Prostate gland (tissue), 2 donors: ENCODE measurements at regions of chr19 and their contacts with region 1.

Region 1: GRCh38 chr19:52637718-52638585 is at the start of gene ZNF83:
- DNase-seq: peak; percentile 98
- H3K4me3 ChIP-seq: peak within 1 kb of the TSS; percentile 47 to 71
- H3K27ac ChIP-seq: peak within 1 kb of the TSS; percentile 78 to 86
- H3K4me1 ChIP-seq: no peaks in the 10 kb centered on the region
- H3K27me3 ChIP-seq: no peaks in the 10 kb centered on the region
- CTCF ChIP-seq: no peak
- POLR2A ChIP-seq: peak; percentile 60
- total RNA-seq, gene ZNF83: 36.3 to 62.1 TPM

Region 2: DNA sequence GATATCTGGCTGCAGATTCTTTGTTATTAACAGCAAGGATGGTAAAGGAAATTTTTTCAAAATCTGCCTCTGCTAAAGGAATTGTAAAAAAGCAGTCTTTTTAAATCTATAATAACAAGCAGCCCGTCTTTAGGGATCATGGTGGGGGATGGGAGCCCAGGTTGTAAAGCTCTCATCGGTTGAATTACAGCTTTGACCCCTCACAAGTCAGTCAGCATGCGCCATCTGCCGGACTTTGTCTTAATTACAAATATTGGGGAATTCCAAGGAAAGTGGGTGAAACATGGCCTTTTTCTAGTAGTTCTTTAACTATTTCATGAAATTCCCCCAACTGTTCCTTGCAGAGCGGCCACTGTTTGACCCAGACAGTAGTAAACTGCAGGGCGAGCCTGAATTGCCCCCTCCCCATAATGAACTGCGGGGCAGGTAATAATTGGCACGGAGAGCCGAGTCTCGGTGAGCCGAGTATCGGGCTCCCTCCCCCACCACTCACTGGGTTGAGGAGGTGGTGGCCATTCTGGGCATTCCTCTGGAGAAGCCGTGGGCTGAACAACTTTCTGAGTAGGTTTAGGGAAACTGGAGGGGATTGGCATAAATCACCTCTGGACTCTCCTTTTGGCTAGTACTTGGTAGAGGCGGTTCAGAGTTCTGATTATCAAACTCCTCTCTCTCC is 173.0 kb before region 1 on chr19:
- intact Hi-C with region 1: no loop called
- DNase-seq: no peak
- H3K4me3 ChIP-seq: no peak overlapping the region
- H3K27ac ChIP-seq: no peak overlapping the region
- H3K4me1 ChIP-seq: no peaks in the 10 kb centered on the region
- H3K27me3 ChIP-seq: no peaks in the 10 kb centered on the region
- CTCF ChIP-seq: no peak
- POLR2A ChIP-seq: no peak

Region 3: GRCh38 chr19:52570000-52570861 is 67.7 kb before region 1 on chr19 and contains the start of gene ZNF701:
- intact Hi-C with region 1: loop called (anchors 2 kb)
- DNase-seq: peak; percentile 95
- H3K4me3 ChIP-seq: peak within 1 kb of the TSS; percentile 59 to 77
- H3K27ac ChIP-seq: peak within 1 kb of the TSS; percentile 73 to 81
- H3K4me1 ChIP-seq: no peaks in the 10 kb centered on the region
- H3K27me3 ChIP-seq: no peaks in the 10 kb centered on the region
- CTCF ChIP-seq: peak in 2 of 4 experiments; percentile 48 to 67
- POLR2A ChIP-seq: peak; percentile 88
- total RNA-seq, gene ZNF701: 15.4 to 22.1 TPM